ENCODE measurements at regions of chr7 and their contacts with region 1.

Region 1: DNA sequence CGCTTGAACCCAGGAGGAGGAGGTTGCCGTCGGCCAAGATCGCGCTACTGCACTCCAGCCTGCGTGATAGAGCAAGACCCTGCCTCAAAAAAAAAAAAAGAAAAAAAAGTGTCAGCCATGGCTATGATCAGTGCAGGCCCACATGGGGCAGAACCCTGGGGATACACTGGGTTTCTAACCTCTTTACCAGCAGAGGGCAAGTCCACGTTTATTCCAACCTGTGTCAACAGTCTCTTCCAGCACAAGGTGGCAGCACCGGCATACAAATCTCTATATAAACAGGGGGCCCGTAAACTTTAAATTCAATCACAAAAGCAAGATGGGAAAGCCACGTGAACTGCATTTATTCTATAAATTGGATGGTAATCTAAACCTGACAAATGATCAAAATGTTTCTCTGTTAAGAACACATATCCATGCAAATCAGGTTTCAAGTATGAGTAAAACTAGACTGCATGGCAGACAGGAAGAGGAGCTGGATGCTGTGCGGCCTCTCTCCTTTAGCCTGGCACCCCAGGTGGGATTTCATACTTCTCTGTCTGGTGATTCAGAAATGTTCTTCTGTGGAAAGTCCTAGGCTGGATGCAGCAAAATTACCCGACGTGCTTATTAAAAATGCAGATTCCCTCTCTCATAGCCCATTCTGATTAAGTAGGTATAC is 60.0 kb upstream of the STEAP1B start:
- DNase-seq: peak; percentile 66
- ATAC-seq: peak; percentile 85 to 88
- H3K4me3 ChIP-seq: no peak overlapping the region
- H3K27ac ChIP-seq: no peak overlapping the region
- H3K4me1 ChIP-seq: peaks cover 51% of the 10 kb centered on the region
- H3K27me3 ChIP-seq: no peaks in the 10 kb centered on the region
- CTCF ChIP-seq: peak; percentile 88

Region 2: DNA sequence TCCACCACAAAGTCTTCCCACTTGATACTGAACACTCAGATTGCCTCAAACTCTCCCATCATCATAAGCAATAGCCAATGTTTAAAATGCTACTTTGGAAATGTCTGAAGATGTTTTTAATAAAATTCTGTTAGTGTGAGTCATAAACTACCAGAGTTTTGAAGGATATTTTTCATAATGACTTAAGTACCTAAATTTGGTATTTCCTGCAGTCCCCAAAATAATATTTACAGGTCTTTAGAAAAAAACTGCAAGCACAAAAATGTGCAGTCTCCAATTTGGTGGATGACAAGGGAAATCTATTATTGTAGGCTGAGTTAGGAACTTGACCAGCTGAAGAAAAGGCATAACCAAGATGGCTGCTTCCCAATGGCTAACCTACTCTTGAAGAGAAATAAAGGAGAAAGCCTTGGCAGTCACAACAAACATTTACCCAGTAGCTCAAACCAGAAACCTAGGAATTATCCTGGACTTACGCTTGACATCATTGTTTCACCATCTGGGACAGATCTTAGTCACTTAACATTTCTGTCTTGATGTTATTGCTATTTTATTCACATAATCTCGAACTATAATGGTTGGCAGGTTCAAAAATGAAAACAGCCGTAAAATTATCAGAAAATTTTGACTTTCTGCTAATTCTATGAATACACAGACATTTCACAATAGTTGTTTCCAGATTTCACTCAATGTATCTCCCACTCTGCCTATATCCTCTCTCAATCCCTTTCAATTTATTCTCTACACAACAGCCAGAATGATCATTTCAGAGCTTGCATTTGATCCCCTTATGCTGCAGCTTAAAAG is 51.2 kb after region 1 on chr7:
- intact Hi-C with region 1: no loop called
- DNase-seq: no peak
- ATAC-seq: no peak
- H3K4me3 ChIP-seq: no peak overlapping the region
- H3K27ac ChIP-seq: no peak overlapping the region
- H3K4me1 ChIP-seq: no peaks in the 10 kb centered on the region
- H3K27me3 ChIP-seq: no peaks in the 10 kb centered on the region
- CTCF ChIP-seq: no peak

Region 3: GRCh38 chr7:22726345-22727185 is 166.6 kb after region 1 on chr7:
- intact Hi-C with region 1: loop called (anchors 10 kb)
- DNase-seq: peak; percentile 66
- ATAC-seq: peak; percentile 76 to 80
- H3K4me3 ChIP-seq: peak overlapping the region; percentile 56
- H3K27ac ChIP-seq: peak overlapping the region; percentile 84
- H3K4me1 ChIP-seq: peaks cover 58% of the 10 kb centered on the region
- H3K27me3 ChIP-seq: peaks cover 4% of the 10 kb centered on the region
- CTCF ChIP-seq: peak; percentile 58

Region 4: DNA sequence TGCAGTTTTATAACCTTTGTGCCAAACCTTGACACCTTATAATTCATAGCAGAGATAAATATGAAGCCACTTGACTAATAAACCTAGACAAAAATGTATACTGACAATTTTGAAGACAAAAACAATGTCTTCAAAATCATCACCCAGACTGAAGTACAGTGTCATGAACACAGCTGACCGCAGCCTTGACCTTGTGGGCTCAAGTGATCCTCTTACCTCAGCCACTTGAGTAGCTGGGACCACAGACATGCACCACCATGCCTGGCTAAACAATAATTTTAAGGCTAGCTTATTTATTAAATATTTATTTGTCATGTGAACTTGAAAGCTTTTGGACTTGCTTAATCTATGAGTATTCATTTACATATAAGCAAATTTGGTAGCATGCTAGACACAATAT is 191.4 kb after region 1 on chr7:
- intact Hi-C with region 1: no loop called
- DNase-seq: no peak
- ATAC-seq: no peak
- H3K4me3 ChIP-seq: no peak overlapping the region
- H3K27ac ChIP-seq: no peak overlapping the region
- H3K4me1 ChIP-seq: no peaks in the 10 kb centered on the region
- H3K27me3 ChIP-seq: no peaks in the 10 kb centered on the region
- CTCF ChIP-seq: no peak

Region 5: GRCh38 chr7:23062452-23062851 is 502.5 kb after region 1 on chr7:
- intact Hi-C with region 1: loop called (anchors 10 kb)
- DNase-seq: no peak
- ATAC-seq: no peak
- H3K4me3 ChIP-seq: no peak overlapping the region
- H3K27ac ChIP-seq: no peak overlapping the region
- H3K4me1 ChIP-seq: no peaks in the 10 kb centered on the region
- H3K27me3 ChIP-seq: no peaks in the 10 kb centered on the region
- CTCF ChIP-seq: no peak

Measured in lower lobe of right lung (tissue), 2 donors.